ENCODE measurements at regions of chr11 and their contacts with region 1.

Region 1: DNA sequence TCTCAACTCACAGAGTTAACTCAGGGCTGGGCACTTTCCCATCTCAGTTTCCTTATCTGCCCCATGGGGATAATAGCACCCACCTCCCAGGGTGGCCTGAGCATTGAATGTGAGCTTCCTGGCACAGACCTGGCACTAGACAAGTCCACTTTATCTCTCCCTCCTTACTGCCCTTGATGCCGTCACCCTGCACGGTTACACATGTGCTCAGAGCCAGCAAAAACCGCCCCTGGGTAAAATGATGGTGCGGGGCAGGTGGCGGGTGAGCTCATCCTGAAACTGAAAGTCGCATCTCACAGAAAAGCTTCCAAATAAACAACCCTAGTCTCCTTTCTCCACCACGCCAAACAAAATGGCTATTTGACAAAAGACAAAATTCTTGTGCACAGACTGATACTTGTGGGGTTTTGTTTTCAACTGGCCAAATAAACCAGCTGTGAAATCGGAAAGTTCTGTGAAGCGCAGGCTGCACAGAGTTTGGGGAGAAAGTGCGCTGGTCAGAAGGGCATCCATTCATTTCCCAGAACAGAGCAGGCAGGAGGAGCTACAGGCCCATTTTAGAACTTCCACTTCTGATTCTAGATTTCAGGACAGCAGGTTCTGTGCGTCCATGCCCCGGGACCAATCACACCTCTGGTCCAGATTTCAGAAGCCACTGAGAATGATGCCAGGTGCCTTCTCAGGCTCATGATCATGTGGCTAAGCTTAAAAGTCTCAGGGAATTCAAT is 138.1 kb downstream of the SHANK2 start:
- DNase-seq: peak in 5 of 10 donors; percentile 11 to 70 (median 47)

Region 2: GRCh38 chr11:71055925-71056324 is 58.4 kb before region 1 on chr11:
- intact Hi-C with region 1: no loop called
- DNase-seq: peak in 2 of 10 donors; percentile 35 to 72

Region 3: DNA sequence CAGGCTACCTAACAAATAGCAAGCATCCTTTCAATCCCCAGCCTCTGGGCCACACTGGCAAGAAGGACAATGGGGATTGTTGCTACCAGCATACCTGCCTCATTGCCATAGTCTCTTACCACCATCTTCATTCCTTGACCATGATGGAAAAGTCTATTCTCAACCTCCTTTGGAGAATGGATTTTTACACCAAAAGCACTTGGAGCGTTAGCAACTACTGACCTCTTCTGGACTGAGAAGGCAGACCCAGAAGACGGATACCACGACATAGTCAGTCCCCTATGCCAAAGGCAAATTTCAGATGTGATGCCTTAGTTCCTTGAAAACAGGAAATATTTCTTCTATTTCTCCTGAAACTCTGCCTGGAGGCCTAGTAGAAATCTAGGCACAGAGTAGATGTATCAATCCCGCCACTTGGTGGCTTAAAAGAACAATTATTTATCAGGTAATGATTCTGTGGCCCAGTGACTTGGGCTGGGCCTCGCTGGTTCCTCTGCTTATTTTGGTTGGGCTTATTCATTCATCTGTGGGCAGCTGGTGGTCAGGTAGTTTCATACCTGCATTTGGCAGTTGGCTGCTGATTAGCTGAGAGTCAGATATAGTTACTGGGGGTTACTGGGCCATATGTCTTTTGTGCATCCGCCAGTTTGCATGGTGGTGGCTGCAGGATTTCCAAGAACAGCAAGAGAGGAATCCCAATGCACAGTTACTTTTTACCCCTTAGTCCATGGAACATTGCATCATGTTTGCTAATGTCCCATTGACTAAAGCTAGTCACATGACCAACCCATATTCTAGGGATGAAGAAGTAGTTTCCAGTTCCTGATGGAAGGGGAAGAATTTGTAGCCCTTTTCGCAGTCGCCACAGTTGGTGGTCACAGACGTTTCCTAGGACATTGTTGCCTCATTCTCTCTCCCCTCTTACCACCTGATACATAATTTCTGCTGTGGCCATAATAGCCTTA is 258.7 kb after region 1 on chr11:
- intact Hi-C with region 1: loop called (anchors 10 kb)
- DNase-seq: peak in 1 of 10 donors; percentile 31